ENCODE measurements at regions of chr17 and their contacts with region 1.

Region 1: DNA sequence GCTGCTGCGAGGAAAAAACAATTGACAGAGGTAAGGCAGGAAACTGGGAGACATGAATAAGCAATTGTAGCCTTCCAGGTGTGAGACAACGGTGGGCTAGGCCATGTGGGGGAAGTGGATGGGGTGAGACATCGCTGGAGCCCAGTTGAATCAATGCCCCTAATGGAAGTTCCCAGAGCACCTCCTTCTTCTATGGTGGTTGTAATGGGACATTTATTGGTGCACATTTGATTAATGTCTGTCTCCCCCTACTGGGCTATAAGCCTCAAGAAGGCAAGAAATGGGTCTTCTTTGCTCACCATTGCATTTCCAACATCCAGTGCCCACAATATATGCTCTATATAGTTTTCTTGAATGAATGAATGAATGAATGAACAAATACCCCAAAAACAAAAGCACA is 22.7 kb upstream of the CD300E start:
- DNase-seq: no peak
- H3K4me3 Mint-ChIP-seq: no peak overlapping the region
- H3K27ac Mint-ChIP-seq: no peak overlapping the region
- H3K4me1 Mint-ChIP-seq: peaks cover 3% of the 10 kb centered on the region
- H3K27me3 Mint-ChIP-seq: peaks cover 61% of the 10 kb centered on the region

Region 2: DNA sequence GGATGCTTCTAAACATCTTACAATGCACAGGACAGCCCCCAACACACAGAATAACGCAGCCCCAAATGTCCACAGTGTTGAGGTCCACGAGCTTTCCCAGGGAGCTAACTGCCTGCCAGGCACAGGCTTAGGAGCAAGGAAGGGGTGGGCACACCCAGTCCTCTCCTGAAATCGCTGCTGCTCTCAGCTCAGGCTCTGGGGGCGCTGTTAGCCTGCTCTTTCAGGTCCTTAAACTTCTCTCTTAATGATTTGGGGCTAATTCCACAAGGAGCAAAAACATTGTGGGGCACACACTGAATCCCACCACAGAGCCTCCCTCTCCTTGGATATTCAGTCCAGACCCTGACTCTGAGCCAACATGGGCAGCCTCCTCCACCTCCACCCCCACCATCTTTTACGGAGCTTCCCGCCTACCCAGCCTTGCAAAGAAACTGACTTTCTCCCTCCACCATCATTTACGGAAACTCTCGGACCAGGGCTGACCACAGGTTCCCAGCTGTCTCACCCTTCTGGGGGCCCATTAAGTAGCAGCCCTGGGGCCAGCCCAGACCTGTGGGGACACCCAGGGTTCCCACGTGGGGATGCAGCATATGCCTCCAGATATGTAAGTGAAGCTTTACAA is 80.0 kb before region 1 on chr17:
- intact Hi-C with region 1: loop called (anchors 5 kb)
- DNase-seq: peak; percentile 78
- H3K4me3 Mint-ChIP-seq: no peak overlapping the region
- H3K27ac Mint-ChIP-seq: no peak overlapping the region
- H3K4me1 Mint-ChIP-seq: peaks cover 15% of the 10 kb centered on the region
- H3K27me3 Mint-ChIP-seq: peaks cover 20% of the 10 kb centered on the region